WTC11 (cell line): ENCODE measurements at regions of chr7 and their contacts with region 1.

Region 1: DNA sequence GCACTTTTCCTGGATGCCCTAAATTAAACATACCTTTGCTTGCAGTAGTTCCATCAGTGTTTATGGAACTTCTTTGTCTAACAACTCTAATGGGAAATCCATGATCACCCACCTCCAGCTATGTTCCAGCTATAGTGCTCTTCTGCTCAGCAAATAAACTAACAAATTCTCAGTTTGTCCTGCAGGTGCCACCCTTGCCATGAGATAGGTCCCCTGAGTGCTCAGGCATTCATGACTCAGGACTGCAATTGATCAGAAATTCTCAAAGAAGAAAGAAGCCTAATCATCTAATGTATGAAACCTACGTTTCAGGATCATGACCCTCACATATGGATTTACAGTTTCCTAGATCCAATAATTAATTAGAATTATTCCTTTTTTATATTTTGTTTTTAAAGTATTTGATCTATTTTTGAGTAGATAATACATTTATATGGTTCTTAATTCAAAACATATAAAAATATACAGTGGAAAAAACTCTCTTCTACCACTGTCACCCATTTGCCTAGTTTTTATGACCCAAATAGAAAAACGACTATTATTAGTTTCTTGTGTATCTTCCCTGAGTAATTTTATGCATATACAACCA is 48.7 kb upstream of the DYNC1I1 start:
- DNase-seq: peak; percentile 60
- ATAC-seq: peak; percentile 91
- H3K4me3 Mint-ChIP-seq: no peak overlapping the region
- H3K27ac Mint-ChIP-seq: no peak overlapping the region
- H3K4me1 Mint-ChIP-seq: no peaks in the 10 kb centered on the region
- H3K27me3 Mint-ChIP-seq: no peaks in the 10 kb centered on the region
- CTCF ChIP-seq: peak; percentile 54

Region 2: GRCh38 chr7:95622001-95622549 is 101.6 kb before region 1 on chr7:
- CTCF ChIA-PET with region 1: no interaction called
- POLR2A ChIA-PET with region 1: no interaction called
- DNase-seq: no peak
- ATAC-seq: no peak
- H3K4me3 Mint-ChIP-seq: no peak overlapping the region
- H3K27ac Mint-ChIP-seq: no peak overlapping the region
- H3K4me1 Mint-ChIP-seq: no peaks in the 10 kb centered on the region
- H3K27me3 Mint-ChIP-seq: no peaks in the 10 kb centered on the region; the same call in 1 of the 2 replicates
- CTCF ChIP-seq: no peak

Region 3: GRCh38 chr7:95865716-95866371 is 142.2 kb after region 1 on chr7:
- CTCF ChIA-PET with region 1: interaction called, 122 read pairs
- POLR2A ChIA-PET with region 1: interaction called, 5 read pairs
- DNase-seq: no peak
- ATAC-seq: peak; percentile 86
- H3K4me3 Mint-ChIP-seq: no peak overlapping the region
- H3K27ac Mint-ChIP-seq: peak overlapping the region; percentile 7; the same call in 1 of the 2 replicates
- H3K4me1 Mint-ChIP-seq: peaks cover 15% of the 10 kb centered on the region
- H3K27me3 Mint-ChIP-seq: no peaks in the 10 kb centered on the region
- CTCF ChIP-seq: no peak